PC-3 (cell line): ENCODE measurements at regions of chr15 and their contacts with region 1.

Region 1: GRCh38 chr15:99324082-99324620 is 72.9 kb downstream of the LRRC28 start:
- DNase-seq: peak; percentile 77
- ATAC-seq: peak; percentile 97
- H3K4me3 ChIP-seq: peak overlapping the region; percentile 61
- H3K27ac ChIP-seq: peak overlapping the region; percentile 85
- H3K4me1 ChIP-seq: peaks cover 37% of the 10 kb centered on the region
- H3K27me3 ChIP-seq: no peaks in the 10 kb centered on the region
- CTCF ChIP-seq: no peak

Region 2: DNA sequence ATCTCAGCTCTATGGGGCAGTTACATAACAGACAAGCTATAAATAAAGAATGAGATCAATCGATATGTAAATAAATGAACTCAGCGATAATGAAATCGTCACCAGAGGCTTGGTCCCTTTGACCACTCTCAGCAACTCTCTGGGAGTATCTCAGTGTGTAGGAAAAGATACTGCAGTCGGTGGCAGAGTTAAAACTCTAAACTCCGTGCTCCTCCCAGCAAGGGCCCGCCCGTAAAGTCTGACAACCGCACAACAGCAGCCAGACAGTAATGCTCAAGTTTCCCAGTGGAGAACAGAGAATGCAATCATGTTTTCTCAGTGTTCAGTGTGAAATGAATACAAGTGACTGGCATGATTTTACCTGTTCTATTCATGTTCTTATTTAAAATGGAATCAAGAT is 704.1 kb before region 1 on chr15:
- CTCF ChIA-PET with region 1: no interaction called
- POLR2A ChIA-PET with region 1: no interaction called
- intact Hi-C with region 1: no loop called
- DNase-seq: no peak
- ATAC-seq: no peak
- H3K4me3 ChIP-seq: no peak overlapping the region
- H3K27ac ChIP-seq: no peak overlapping the region
- H3K4me1 ChIP-seq: no peaks in the 10 kb centered on the region
- H3K27me3 ChIP-seq: peaks cover 88% of the 10 kb centered on the region
- CTCF ChIP-seq: no peak

Region 3: GRCh38 chr15:99224372-99225214 is 99.6 kb before region 1 on chr15:
- CTCF ChIA-PET with region 1: no interaction called
- POLR2A ChIA-PET with region 1: no interaction called
- intact Hi-C with region 1: no loop called
- DNase-seq: peak; percentile 33
- ATAC-seq: peak; percentile 78
- H3K4me3 ChIP-seq: no peak overlapping the region
- H3K27ac ChIP-seq: peak overlapping the region; percentile 88
- H3K4me1 ChIP-seq: peaks cover 16% of the 10 kb centered on the region
- H3K27me3 ChIP-seq: no peaks in the 10 kb centered on the region
- CTCF ChIP-seq: no peak

Region 4: DNA sequence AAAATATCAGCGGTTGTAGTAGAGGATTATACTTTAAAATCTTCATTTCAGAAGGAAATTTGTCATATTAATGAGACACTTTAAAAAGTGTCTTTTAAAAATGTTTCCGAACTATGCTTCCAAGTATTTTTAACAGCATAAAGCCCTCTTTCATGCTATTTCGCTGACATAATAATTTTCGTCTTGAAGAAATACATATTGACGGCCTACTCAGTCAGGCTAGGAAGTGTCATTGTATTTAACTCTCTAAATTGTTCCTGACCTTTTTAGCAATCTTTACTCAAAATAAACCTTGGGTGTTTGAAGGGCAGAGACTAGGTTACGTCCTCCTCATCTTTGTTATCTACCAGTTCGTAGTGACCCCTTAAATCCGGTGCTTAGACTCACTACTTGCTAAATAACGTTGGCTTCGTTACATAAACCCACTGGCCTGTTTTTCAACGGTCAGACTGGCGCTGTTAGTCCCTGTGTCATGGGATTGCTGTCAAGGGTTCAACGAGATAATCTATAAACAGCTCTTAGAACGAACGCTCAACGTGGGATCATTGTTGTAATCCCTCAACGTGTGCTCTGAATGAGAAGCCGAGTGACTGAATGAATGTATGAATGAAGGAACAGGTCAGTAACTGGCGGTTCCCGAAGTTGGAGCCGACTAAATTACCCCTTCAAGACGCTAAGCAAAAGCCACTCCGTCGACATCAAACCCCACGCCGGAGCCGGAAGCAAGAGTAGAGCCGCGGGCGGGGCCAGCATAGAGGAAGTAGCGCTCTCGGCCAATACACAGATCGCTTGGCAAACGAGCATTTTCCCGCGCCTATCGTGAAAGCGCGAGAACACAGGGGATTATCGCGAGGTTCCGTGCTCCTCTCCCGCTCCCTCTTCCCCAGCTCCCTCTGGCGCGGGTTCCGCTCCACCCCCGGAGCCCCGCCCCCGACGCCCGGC is 73.4 kb before region 1 on chr15:
- CTCF ChIA-PET with region 1: no interaction called
- POLR2A ChIA-PET with region 1: no interaction called
- intact Hi-C with region 1: loop called (anchors 5 kb)
- DNase-seq: peak; percentile 99
- ATAC-seq: peak; percentile 90
- H3K4me3 ChIP-seq: peak overlapping the region; percentile 78
- H3K27ac ChIP-seq: peak overlapping the region; percentile 73
- H3K4me1 ChIP-seq: peaks cover 38% of the 10 kb centered on the region
- H3K27me3 ChIP-seq: no peaks in the 10 kb centered on the region
- CTCF ChIP-seq: no peak

Region 5: DNA sequence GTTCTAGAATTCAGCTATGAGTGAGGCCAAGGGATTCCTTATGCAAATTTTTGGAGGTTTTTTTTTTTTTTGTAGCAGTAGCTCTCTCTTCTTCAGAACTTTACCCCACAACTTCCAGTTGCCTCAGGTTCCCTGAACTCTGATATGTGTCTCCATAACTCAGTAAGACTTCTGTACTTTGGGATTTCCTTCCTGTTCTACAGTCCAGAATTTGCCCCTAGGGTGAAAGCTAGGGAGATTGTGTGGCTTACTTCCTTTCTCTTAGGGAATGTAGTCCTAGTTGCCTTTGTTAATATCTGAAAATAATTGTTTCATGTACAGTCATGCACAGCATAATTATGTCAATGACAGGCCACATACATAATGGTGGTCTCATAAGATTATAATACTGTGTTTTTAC is 42.0 kb before region 1 on chr15:
- CTCF ChIA-PET with region 1: interaction called, 15 read pairs
- POLR2A ChIA-PET with region 1: no interaction called
- intact Hi-C with region 1: no loop called
- DNase-seq: peak; percentile 4
- ATAC-seq: no peak
- H3K4me3 ChIP-seq: no peak overlapping the region
- H3K27ac ChIP-seq: no peak overlapping the region
- H3K4me1 ChIP-seq: no peaks in the 10 kb centered on the region
- H3K27me3 ChIP-seq: no peaks in the 10 kb centered on the region
- CTCF ChIP-seq: no peak

Region 6: DNA sequence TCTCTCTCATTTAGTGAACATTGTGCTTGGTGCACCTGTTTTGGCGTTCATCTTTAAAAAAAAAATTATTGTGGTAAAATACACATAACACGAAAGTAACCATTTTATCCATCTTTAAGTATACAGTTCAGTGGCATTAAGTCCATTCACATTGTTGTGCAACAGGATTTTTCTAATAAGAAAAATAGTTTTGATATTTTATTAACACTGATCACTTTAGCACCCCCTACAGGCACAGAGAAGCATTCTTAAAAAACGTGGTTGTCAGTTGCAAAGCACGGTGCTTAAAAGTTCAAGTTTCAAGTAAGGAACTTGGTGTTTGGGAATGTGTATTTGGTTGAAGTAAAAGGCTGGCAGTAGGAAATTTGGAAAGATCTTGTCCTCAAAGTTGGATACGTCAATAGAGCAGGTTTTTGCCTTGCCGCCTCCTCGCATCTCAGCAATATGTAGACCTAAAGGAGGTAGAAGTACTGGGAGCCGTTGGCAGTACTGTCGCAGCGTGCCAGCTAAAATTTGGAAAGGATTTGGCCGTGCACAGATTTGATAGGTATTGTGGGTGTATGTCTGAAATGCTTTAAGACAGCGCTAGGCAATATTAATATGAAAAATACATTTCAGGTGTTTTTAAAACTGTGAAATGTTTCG is 37.5 kb after region 1 on chr15:
- CTCF ChIA-PET with region 1: no interaction called
- POLR2A ChIA-PET with region 1: no interaction called
- intact Hi-C with region 1: no loop called
- DNase-seq: peak; percentile 51
- ATAC-seq: no peak
- H3K4me3 ChIP-seq: no peak overlapping the region
- H3K27ac ChIP-seq: no peak overlapping the region
- H3K4me1 ChIP-seq: no peaks in the 10 kb centered on the region
- H3K27me3 ChIP-seq: no peaks in the 10 kb centered on the region
- CTCF ChIP-seq: peak; percentile 74